PC-3 (cell line): ENCODE measurements at regions of chr11 and their contacts with region 1.

Region 1: DNA sequence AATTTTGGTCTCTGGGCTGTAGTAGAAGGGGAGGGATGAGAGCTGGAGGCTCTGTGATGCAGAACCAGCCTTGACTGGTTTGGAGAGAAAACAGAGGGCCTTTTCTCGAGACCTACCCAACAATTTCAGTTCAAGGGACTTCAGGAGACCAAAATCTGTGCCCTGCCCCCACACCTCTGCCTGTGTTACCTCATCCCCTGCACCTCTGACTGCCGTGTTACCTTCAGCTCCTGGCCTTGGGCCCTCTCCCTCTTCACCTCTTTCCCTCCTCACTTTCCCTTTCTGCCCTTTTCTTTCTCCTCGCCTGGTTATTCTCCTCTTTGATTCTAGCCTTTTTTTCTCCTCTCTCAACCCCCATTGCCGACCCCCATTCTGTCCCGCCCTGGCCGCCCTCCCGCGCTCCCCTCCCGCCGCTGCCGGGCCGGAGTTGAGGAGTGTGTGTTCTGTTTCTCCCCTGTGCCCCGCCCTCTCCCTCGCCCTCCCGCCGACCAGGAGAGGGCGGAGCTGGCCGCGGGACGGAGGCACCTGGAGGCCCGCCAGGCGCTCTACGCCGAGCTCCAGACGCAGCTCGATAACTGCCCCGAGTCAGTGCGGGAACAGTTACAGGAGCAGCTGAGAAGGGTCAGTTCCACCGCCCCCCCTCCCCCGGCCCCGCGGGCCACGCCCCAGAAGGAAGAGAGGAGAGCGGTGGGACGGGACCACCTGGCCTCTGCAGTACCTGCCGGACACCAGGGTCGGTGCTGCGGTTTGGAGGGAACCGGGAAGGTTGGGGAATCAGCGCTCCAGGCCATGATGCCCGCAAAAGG is 27.2 kb downstream of the PHLDB1 start:
- DNase-seq: peak; percentile 86
- ATAC-seq: peak; percentile 87
- H3K4me3 ChIP-seq: peak overlapping the region; percentile 62
- H3K27ac ChIP-seq: no peak overlapping the region
- H3K4me1 ChIP-seq: peaks cover 15% of the 10 kb centered on the region; the same call in 1 of the 2 replicates
- H3K27me3 ChIP-seq: no peaks in the 10 kb centered on the region
- CTCF ChIP-seq: no peak; the same call in 1 of the 2 replicates

Region 2: DNA sequence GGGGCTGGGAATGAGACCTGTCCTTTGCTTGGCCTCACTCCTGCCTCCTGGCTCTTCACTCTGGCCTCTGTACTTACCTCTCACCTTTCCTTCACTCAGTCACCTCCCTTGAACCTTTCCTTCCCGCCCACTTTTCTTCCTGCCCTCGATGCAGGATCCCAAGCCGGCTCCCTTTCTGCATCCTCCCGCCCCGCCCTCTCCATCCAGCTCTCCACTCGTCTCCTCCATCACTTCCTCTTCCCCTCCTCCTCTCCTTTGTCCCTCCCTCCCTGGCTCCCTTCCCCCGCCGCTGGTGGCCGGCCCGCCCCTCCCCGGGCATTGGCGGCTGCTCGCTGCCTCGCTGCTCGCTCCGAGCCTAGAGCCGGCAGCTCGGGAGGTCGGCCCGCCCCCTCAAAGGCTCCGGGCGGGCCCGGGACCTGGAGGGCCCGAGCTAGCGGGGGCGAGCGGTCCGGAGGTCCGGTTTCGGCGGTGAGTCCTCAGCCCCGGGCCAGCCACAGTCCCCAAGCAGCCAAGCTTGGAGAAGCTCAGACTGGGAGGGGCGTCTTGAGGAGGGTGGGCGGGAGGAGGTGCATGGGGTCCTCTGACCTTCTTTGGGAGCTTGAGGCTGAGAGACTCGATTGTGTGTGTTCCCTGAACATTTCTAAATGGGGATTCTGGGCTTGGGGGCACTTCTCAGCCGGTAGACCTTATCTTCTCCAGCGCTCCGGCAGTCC is 13.4 kb before region 1 on chr11:
- CTCF ChIA-PET with region 1: interaction called, 20 read pairs
- POLR2A ChIA-PET with region 1: interaction called, 3 read pairs
- intact Hi-C with region 1: no loop called
- DNase-seq: peak; percentile 90
- ATAC-seq: peak; percentile 60
- H3K4me3 ChIP-seq: peak overlapping the region; percentile 75
- H3K27ac ChIP-seq: peak overlapping the region; percentile 20; the same call in 1 of the 2 replicates
- H3K4me1 ChIP-seq: peaks cover 61% of the 10 kb centered on the region
- H3K27me3 ChIP-seq: no peaks in the 10 kb centered on the region
- CTCF ChIP-seq: no peak